ENCODE measurements at regions of chr11 and their contacts with region 1.

Region 1: GRCh38 chr11:72080256-72080974 is at the starts of genes LRRC51 and NUMA1:
- DNase-seq: peak; percentile 100
- H3K4me3 Mint-ChIP-seq: peak within 1 kb of the TSS; percentile 99
- H3K27ac Mint-ChIP-seq: peak within 1 kb of the TSS; percentile 99
- H3K4me1 Mint-ChIP-seq: peaks cover 48% of the 10 kb centered on the region
- H3K27me3 Mint-ChIP-seq: no peaks in the 10 kb centered on the region
- CTCF ChIP-seq: no peak
- total RNA-seq, gene LRRC51: 9.3 and 9.5 TPM in 2 replicates
- total RNA-seq, gene NUMA1: 109 and 113 TPM in 2 replicates

Region 2: DNA sequence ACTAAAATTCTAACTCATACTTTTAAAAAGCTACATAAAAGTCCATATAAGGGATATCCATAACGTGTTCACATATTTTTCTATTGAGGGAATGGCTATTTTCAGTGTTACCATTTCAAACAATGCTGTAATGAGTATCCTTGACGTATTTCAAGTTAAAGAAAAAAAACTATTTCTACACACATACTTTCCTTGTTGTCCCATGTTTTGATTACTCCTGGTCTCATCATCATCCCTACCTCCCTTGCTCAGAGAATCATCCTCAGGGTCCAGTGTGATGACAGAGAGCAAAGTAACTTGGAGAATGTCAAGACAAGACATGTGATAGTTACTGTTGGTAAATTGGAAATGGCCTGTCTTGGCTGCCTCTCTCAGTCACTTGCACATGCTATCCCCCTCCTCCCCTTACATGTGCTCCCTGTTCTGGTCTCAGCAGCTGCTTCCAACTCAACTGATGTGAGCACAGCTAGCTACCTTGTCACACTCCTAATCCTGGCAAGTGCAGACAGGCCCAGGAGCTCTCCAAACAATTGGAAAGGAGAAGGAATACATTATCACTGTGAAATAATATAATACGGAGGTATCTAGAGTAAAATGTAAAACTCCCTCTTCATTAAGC is 21.9 kb before region 1 on chr11:
- CTCF ChIA-PET with region 1: interaction called, 3 read pairs
- POLR2A ChIA-PET with region 1: interaction called, 19 read pairs
- intact Hi-C with region 1: no loop called
- DNase-seq: no peak
- H3K4me3 Mint-ChIP-seq: no peak overlapping the region
- H3K27ac Mint-ChIP-seq: peak overlapping the region; percentile 39
- H3K4me1 Mint-ChIP-seq: peaks cover 9% of the 10 kb centered on the region
- H3K27me3 Mint-ChIP-seq: no peaks in the 10 kb centered on the region
- CTCF ChIP-seq: no peak

Region 3: GRCh38 chr11:72069787-72070251 is 10.6 kb before region 1 on chr11:
- CTCF ChIA-PET with region 1: interaction called, 3 read pairs
- POLR2A ChIA-PET with region 1: interaction called, 51 read pairs
- intact Hi-C with region 1: no loop called
- DNase-seq: peak; percentile 86
- H3K4me3 Mint-ChIP-seq: peak overlapping the region; percentile 72
- H3K27ac Mint-ChIP-seq: peak overlapping the region; percentile 96
- H3K4me1 Mint-ChIP-seq: peaks cover 59% of the 10 kb centered on the region
- H3K27me3 Mint-ChIP-seq: no peaks in the 10 kb centered on the region
- CTCF ChIP-seq: no peak

Region 4: GRCh38 chr11:72091005-72091691 is 10.7 kb after region 1 on chr11:
- CTCF ChIA-PET with region 1: interaction called, 24 read pairs
- POLR2A ChIA-PET with region 1: interaction called, 8 read pairs
- intact Hi-C with region 1: no loop called
- DNase-seq: peak; percentile 69
- H3K4me3 Mint-ChIP-seq: no peak overlapping the region
- H3K27ac Mint-ChIP-seq: peak overlapping the region; percentile 70
- H3K4me1 Mint-ChIP-seq: no peaks in the 10 kb centered on the region
- H3K27me3 Mint-ChIP-seq: no peaks in the 10 kb centered on the region
- CTCF ChIP-seq: peak; percentile 77

Region 5: GRCh38 chr11:72102946-72103753 is 22.7 kb after region 1 on chr11 and contains the start of gene LAMTOR1:
- CTCF ChIA-PET with region 1: interaction called, 4 read pairs
- POLR2A ChIA-PET with region 1: interaction called, 42 read pairs
- intact Hi-C with region 1: no loop called
- DNase-seq: peak; percentile 98
- H3K4me3 Mint-ChIP-seq: peak within 1 kb of the TSS; percentile 100
- H3K27ac Mint-ChIP-seq: peak within 1 kb of the TSS; percentile 100
- H3K4me1 Mint-ChIP-seq: peaks cover 43% of the 10 kb centered on the region
- H3K27me3 Mint-ChIP-seq: no peaks in the 10 kb centered on the region
- CTCF ChIP-seq: peak; percentile 29
- total RNA-seq, gene LAMTOR1: 76.9 and 82.4 TPM in 2 replicates

Region 6: DNA sequence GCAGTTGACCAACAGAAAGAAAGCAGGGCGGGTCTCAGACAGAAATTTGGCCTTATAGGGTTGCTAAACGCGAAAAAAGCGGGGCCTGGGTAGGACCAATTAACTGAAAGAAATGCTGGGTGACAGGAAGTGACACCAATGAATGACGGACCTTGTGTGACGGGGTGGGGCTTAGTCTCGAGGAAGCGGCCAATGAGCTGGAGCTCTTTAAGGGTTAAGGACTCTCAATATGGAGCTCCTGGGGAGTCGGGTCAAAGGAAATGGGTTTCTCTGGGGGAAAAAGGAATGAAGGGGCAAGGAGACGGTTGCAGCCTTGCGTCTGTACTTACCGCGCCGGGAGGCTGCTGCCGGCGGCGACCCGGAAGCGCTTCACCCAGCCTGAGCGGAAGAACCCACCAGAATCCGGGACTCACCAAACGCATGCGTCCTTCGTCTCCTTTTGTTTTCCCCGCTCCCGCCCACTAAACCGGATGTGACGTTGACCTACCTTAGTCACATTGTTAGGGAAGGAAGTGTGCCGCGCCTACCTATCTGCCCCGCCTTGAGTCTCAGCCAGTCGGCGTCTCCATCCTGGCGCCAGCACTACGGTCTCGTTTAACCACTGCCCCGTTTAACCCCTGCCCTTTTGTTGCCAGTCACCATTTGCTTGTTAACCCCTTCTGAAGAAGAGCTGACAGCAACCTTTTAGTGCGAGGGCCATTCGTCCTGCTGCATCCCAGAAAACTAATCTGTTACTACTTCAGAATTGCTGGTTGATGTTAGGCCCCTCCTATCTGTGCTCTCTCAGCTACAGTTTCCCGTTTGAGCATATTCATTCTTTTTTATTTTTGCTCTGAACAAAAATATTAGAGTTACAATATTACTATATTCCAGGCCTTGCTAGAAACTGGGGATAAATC is 32.2 kb after region 1 on chr11 and contains the start of gene ANAPC15:
- CTCF ChIA-PET with region 1: no interaction called
- POLR2A ChIA-PET with region 1: interaction called, 29 read pairs
- intact Hi-C with region 1: loop called (anchors 2 kb)
- DNase-seq: peak; percentile 100
- H3K4me3 Mint-ChIP-seq: peak within 1 kb of the TSS; percentile 98
- H3K27ac Mint-ChIP-seq: peak within 1 kb of the TSS; percentile 100
- H3K4me1 Mint-ChIP-seq: peaks cover 20% of the 10 kb centered on the region
- H3K27me3 Mint-ChIP-seq: no peaks in the 10 kb centered on the region
- CTCF ChIP-seq: no peak
- total RNA-seq, gene ANAPC15: 52.2 and 63.6 TPM in 2 replicates